ENCODE measurements at regions of chr11 and their contacts with region 1.

Region 1: GRCh38 chr11:112100462-112100861 is 13.8 kb downstream of the SDHD start:
- DNase-seq: no peak

Region 2: GRCh38 chr11:112132737-112133136 is 32.3 kb after region 1 on chr11:
- in situ Hi-C with region 1: no loop called
- DNase-seq: no peak

Region 3: DNA sequence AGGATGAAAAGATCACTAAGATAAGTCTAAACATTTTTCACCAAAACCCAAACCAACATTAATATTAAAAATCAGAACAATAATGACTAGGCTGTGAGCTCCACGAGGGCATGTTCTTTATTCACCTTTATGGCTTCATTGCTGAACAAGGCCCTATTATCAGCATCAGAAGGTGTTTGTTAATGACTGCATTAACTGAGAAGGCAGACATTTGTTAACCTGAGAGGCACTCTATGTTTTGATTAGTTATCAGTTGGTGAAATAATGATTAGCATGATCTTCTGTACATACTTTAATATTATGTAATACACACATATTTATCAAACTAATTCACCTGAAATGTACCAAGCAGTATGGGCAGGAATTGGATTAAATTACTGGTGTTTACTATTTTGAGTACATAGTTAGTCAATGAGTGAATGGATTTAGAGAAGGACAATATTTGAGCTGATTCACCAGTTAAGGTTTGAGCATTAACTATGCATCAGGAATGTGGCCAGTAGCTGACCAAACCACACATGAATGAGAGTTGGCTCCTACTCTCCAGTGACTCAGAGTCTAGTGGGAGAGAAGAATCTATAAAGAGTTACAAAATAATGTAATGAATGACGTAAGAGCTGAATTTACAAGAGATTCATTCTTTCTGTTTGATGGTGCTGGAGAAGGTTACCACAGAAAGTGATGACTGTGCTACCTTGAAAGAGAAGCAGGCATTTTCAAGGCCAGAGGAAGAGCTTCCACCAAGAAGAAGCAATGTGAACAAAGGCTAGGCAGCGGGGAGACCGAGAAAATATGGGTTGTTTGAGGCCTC is 56.7 kb after region 1 on chr11:
- in situ Hi-C with region 1: loop called (anchors 10 kb)
- DNase-seq: peak; percentile 94

Measured in Caki2 (cell line).